ENCODE measurements at regions of chr12 and their contacts with region 1.

Region 1: DNA sequence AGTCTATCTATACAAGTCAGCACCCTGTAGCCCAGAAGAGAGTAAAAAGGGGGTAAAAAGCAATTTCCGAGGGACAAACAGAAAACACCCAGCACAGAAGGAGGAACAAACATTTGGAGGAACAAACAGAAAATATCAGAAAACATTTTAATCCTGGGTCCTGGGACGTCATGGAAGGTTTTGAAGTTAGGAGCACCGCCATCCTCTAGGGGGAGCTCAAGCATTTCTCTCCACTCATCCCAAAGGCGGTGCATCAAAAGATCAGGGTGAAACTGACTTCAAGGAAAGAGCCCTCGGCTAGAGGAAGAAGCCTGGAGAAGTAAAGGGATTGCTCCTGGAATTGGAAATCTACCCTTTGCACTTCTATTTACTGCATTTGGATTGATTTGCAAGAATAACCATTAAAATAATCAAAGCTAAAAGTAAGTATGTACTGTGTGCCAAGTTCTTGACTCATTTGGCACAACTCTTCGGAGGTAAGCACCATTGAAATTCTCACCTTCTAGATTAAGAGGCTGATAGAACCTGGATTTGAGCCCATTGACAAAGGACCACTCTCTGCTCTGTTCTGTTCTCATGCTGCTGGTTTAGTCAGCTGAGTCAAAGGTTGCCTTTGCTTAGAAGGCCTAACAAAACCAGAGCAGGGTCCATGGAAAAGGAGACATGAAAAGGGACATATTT is 17.2 kb upstream of the POC1B start:
- DNase-seq: peak; percentile 75
- H3K4me3 Mint-ChIP-seq: no peak overlapping the region
- H3K27ac Mint-ChIP-seq: no peak overlapping the region
- H3K4me1 Mint-ChIP-seq: peaks cover 4% of the 10 kb centered on the region
- H3K27me3 Mint-ChIP-seq: no peaks in the 10 kb centered on the region

Region 2: GRCh38 chr12:89556976-89557375 is 13.9 kb after region 1 on chr12:
- CTCF ChIA-PET with region 1: interaction called, 14 read pairs
- POLR2A ChIA-PET with region 1: no interaction called
- intact Hi-C with region 1: no loop called
- DNase-seq: no peak
- H3K4me3 Mint-ChIP-seq: no peak overlapping the region
- H3K27ac Mint-ChIP-seq: no peak overlapping the region
- H3K4me1 Mint-ChIP-seq: no peaks in the 10 kb centered on the region
- H3K27me3 Mint-ChIP-seq: no peaks in the 10 kb centered on the region

Region 3: GRCh38 chr12:89960011-89960507 is 417.0 kb after region 1 on chr12:
- CTCF ChIA-PET with region 1: interaction called, 3 read pairs
- POLR2A ChIA-PET with region 1: no interaction called
- intact Hi-C with region 1: loop called (anchors 5 kb)
- DNase-seq: peak; percentile 57
- H3K4me3 Mint-ChIP-seq: no peak overlapping the region
- H3K27ac Mint-ChIP-seq: no peak overlapping the region
- H3K4me1 Mint-ChIP-seq: peaks cover 14% of the 10 kb centered on the region
- H3K27me3 Mint-ChIP-seq: no peaks in the 10 kb centered on the region

Region 4: DNA sequence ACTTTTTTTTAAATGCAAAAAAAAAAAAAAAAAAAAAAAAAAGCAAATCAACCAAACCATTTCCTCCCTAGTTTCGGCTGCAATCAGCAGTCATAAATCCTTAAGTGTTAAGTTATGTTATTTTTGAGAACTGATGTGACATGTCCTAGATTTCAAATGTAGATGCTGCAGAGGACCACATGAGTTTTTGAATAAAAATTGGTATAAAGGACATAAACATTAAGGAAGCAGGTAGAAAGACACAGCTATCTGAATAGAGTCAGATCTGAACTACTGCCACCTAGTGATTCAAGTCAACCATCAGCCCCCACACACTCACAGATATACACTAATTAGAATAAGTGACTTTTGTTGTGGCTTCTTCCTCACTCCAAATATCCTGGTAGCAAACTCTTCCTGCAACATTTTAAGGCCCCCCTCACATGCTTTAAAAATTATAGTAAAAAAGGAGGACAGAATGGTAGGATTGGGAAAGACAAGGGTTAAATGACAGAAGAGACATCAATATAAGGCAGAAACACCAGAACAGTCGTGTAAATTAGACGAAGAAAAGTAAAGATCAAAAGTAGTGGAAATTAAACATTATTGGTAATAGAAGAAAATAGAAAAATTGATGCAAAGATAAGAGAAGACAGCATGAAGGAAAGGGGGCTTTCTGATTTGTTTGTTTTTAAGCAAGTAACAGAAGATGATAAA is 560.1 kb after region 1 on chr12:
- CTCF ChIA-PET with region 1: interaction called, 34 read pairs
- POLR2A ChIA-PET with region 1: interaction called, 5 read pairs
- intact Hi-C with region 1: loop called (anchors 1 kb)
- DNase-seq: peak; percentile 13
- H3K4me3 Mint-ChIP-seq: peak overlapping the region; percentile 19
- H3K27ac Mint-ChIP-seq: no peak overlapping the region
- H3K4me1 Mint-ChIP-seq: peaks cover 13% of the 10 kb centered on the region
- H3K27me3 Mint-ChIP-seq: no peaks in the 10 kb centered on the region

Region 5: DNA sequence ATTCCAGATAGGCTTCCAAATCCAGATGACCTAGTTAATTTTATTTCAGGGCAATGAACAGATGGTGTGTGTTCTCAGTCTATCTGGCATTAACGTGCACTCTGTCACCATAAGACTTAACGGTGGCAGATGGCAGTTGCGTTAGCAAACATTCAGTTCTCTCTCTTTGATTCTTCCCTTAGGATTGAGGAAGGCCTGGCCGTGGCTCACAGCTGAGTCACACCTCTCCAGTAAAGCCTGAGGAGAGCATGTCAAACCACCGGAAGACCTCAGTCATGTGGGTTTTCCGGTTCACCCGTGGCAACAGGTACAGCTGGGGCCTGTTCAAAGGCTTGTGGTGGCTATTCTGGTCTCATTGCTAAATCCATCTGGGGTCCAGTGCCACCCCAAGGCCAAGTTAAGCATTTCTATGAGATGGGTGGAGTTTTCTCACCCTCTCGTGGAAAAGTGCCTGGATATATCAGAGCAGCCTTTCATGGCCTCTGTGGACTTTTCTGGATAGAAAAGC is 710.7 kb after region 1 on chr12:
- CTCF ChIA-PET with region 1: interaction called, 7 read pairs
- POLR2A ChIA-PET with region 1: no interaction called
- intact Hi-C with region 1: loop called (anchors 10 kb)
- DNase-seq: peak; percentile 74
- H3K4me3 Mint-ChIP-seq: no peak overlapping the region
- H3K27ac Mint-ChIP-seq: no peak overlapping the region
- H3K4me1 Mint-ChIP-seq: peaks cover 8% of the 10 kb centered on the region
- H3K27me3 Mint-ChIP-seq: no peaks in the 10 kb centered on the region

Region 6: DNA sequence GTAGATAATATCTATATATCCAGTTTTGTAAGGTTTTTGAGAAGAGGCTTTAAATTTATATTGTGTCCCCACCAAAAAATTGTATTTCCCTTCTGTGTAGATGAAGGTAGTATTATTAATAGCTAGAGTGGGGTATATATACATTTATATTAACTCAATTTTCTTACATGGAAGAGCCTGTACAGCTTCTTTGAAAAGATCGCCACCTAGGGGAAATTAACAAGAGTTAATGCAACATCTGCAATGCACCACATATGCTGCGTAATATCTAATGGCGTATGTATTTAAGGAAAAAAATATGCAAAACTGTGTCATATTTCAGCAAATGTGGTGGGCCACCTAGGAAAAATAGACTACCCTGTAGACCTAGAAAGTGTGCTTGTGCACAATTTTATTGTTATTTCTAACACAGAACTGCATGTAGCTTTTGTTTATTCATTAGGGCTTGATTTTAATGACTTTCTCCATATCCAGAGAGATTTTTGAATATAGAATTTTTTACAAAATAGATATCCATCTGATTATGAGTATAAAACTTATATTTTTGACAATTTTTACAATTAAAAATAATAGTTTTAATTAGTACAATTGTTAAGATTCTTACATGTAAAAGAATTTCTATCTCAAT is 1397.9 kb after region 1 on chr12:
- CTCF ChIA-PET with region 1: no interaction called
- POLR2A ChIA-PET with region 1: no interaction called
- intact Hi-C with region 1: loop called (anchors 10 kb)
- DNase-seq: no peak
- H3K4me3 Mint-ChIP-seq: no peak overlapping the region
- H3K27ac Mint-ChIP-seq: no peak overlapping the region
- H3K4me1 Mint-ChIP-seq: no peaks in the 10 kb centered on the region
- H3K27me3 Mint-ChIP-seq: peaks cover 6% of the 10 kb centered on the region

Measured in activated CD4-positive, alpha-beta memory T cell treated with anti-CD3 and anti-CD28 coated beads for 36 hours (primary cell).